Sigmoid colon (tissue), 7 donors: ENCODE measurements at regions of chr20 and their contacts with region 1.

Region 1: GRCh38 chr20:36773597-36774390 is at the start of gene DSN1:
- DNase-seq: peak; percentile 99
- H3K4me3 ChIP-seq: peak within 1 kb of the TSS; percentile 58 to 79 (median 73)
- H3K27ac ChIP-seq: peak within 1 kb of the TSS; percentile 93 to 97 (median 95)
- H3K4me1 ChIP-seq: peaks cover 0 to 34% (median 26%) of the 10 kb centered on the region in 4 donors
- H3K27me3 ChIP-seq: no peaks in the 10 kb centered on the region
- CTCF ChIP-seq: peak in 1 of 4 experiments; percentile 51
- EP300 ChIP-seq: no peak
- POLR2A ChIP-seq: peak; percentile 28 to 77
- total RNA-seq, gene DSN1: 4.4 to 6.4 (median 5.5) TPM

Region 2: GRCh38 chr20:36315542-36316351 is 458.0 kb before region 1 on chr20:
- intact Hi-C with region 1: no loop called
- DNase-seq: peak; percentile 56
- H3K4me3 ChIP-seq: no peak overlapping the region
- H3K27ac ChIP-seq: no peak overlapping the region
- H3K4me1 ChIP-seq: no peaks in the 10 kb centered on the region
- H3K27me3 ChIP-seq: peaks cover 0 to 40% (median 19%) of the 10 kb centered on the region in 3 donors
- CTCF ChIP-seq: no peak
- EP300 ChIP-seq: no peak
- POLR2A ChIP-seq: no peak

Region 3: GRCh38 chr20:36573103-36573794 is 200.5 kb before region 1 on chr20 and contains the start of gene TGIF2:
- intact Hi-C with region 1: loop called (anchors 10 kb)
- DNase-seq: peak; percentile 92
- H3K4me3 ChIP-seq: peak within 1 kb of the TSS; percentile 82 to 87 (median 84)
- H3K27ac ChIP-seq: peak within 1 kb of the TSS; percentile 88 to 94 (median 91)
- H3K4me1 ChIP-seq: peaks cover 0 to 40% (median 29%) of the 10 kb centered on the region in 4 donors
- H3K27me3 ChIP-seq: no peaks in the 10 kb centered on the region
- CTCF ChIP-seq: no peak
- EP300 ChIP-seq: no peak
- POLR2A ChIP-seq: no peak
- total RNA-seq, gene TGIF2: 8.9 to 13.6 (median 11.1) TPM

Region 4: GRCh38 chr20:36827474-36827873 is 53.7 kb after region 1 on chr20:
- intact Hi-C with region 1: loop called (anchors 10 kb)
- DNase-seq: no peak
- H3K4me3 ChIP-seq: no peak overlapping the region
- H3K27ac ChIP-seq: peak overlapping the region; percentile 48 to 86 (median 86)
- H3K4me1 ChIP-seq: peaks cover 2 to 87% (median 59%) of the 10 kb centered on the region in 4 donors
- H3K27me3 ChIP-seq: no peaks in the 10 kb centered on the region
- CTCF ChIP-seq: no peak
- EP300 ChIP-seq: no peak
- POLR2A ChIP-seq: no peak

Region 5: GRCh38 chr20:36886859-36887751 is 113.3 kb after region 1 on chr20:
- intact Hi-C with region 1: loop called (anchors 5 kb)
- DNase-seq: peak; percentile 91
- H3K4me3 ChIP-seq: no peak overlapping the region
- H3K27ac ChIP-seq: peak overlapping the region in 3 of 4 donors; percentile 0 to 36 (median 33)
- H3K4me1 ChIP-seq: peaks cover 0 to 12% (median 7%) of the 10 kb centered on the region in 4 donors
- H3K27me3 ChIP-seq: no peaks in the 10 kb centered on the region
- CTCF ChIP-seq: peak; percentile 88 to 98 (median 94)
- EP300 ChIP-seq: no peak
- POLR2A ChIP-seq: no peak